Naive thymus-derived CD4-positive, alpha-beta T cell (primary cell): ENCODE measurements at regions of chr12 and their contacts with region 1.

Region 1: GRCh38 chr12:6140651-6141447 is 16.4 kb upstream of the VWF start:
- DNase-seq: peak in 8 of 9 donors; percentile 28 to 72 (median 68)
- ATAC-seq: peak; percentile 78
- H3K4me3 ChIP-seq: peak overlapping the region; percentile 24
- H3K4me3 Mint-ChIP-seq: peak overlapping the region; percentile 61 to 88 (median 78)
- H3K27ac ChIP-seq: peak overlapping the region; percentile 62
- H3K27ac Mint-ChIP-seq: peak overlapping the region; percentile 91 to 99 (median 97)
- H3K4me1 ChIP-seq: peaks cover 3 to 51% of the 10 kb centered on the region in 2 donors
- H3K4me1 Mint-ChIP-seq: peaks cover 32 to 61% (median 56%) of the 10 kb centered on the region in 7 donors
- H3K27me3 ChIP-seq: no peaks in the 10 kb centered on the region
- H3K27me3 Mint-ChIP-seq: no peaks in the 10 kb centered on the region

Region 2: DNA sequence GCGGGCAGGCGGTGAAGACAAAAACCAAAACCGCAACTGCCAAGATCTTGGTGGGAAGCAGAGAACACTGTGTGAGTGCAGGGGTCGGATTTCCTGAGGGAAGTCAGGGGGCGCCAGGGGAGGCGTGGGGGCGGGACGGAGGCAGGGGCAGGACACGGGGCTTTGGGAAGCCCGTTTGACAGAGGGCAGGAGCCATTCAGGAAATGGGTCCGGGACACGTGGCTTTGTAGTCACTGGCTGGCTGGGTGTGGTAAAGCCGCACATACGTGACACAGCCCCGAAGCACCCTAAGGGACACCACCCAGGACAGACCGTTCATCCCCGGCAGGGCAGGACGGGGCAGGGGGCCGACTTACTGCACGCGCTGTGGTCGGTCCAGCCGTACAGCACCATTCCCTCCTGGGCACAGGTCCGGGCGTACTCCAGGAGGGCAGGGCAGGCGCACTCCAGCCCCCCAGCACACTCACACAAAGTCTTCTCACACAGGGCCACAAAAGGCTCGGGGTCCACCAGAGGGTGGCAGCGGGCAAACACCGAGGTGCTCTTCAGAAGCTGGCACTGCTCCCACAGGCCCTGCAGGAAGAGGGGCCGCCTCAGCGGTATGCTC is 65.8 kb before region 1 on chr12:
- CTCF ChIA-PET with region 1: interaction called, 5 read pairs
- POLR2A ChIA-PET with region 1: interaction called, 3 read pairs
- intact Hi-C with region 1: loop called in 1 of 2 experiments (anchors 2 kb)
- DNase-seq: peak in 6 of 9 donors; percentile 30 to 48 (median 40)
- ATAC-seq: peak; percentile 84
- H3K4me3 ChIP-seq: peak overlapping the region; percentile 32
- H3K4me3 Mint-ChIP-seq: peak overlapping the region; percentile 83 to 94 (median 89)
- H3K27ac ChIP-seq: no peak overlapping the region
- H3K27ac Mint-ChIP-seq: peak overlapping the region in 7 of 9 donors; percentile 32 to 94 (median 52)
- H3K4me1 ChIP-seq: peaks cover 9 to 18% of the 10 kb centered on the region in 2 donors
- H3K4me1 Mint-ChIP-seq: peaks cover 23 to 29% (median 27%) of the 10 kb centered on the region in 7 donors
- H3K27me3 ChIP-seq: no peaks in the 10 kb centered on the region
- H3K27me3 Mint-ChIP-seq: peaks cover 0 to 30% (median 5%) of the 10 kb centered on the region in 5 donors

Region 3: DNA sequence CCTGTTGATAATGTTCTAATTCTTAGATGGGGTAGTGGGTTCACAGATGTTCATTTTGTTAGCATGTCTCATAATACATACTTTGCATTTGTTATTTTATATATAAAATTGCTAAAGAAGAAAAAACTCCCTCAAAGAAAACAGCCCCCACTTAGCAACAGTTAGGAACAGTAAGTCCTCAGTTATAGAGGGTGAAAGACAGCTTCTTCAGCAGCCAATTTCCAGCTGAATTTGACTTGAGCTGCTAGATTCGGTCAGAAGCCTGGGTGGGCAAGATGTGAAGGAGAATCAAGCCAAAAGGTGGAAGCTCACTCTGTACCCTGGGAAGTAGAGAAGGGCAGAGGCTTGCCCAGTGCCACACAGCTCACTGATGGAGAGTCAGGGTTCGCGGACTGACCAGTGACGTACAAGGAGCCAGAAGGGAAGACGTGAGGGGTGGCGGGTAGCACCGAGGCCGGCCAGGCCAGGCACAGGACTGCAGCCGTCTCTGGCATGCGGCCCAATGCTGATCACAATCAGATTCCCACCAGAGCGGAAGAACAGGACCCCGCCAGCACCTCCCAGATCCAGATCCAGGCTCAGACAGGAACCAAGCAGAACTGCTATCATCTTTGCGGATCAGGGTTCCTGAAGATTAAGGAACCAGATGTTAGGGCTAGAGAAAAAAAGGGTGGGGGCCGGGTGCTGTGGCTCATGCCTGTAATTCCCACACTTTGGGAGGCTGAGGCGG is 14.0 kb after region 1 on chr12:
- CTCF ChIA-PET with region 1: interaction called, 3 read pairs
- POLR2A ChIA-PET with region 1: interaction called, 11 read pairs
- intact Hi-C with region 1: no loop called
- DNase-seq: no peak
- ATAC-seq: no peak
- H3K4me3 ChIP-seq: no peak overlapping the region
- H3K4me3 Mint-ChIP-seq: no peak overlapping the region
- H3K27ac ChIP-seq: no peak overlapping the region
- H3K27ac Mint-ChIP-seq: no peak overlapping the region
- H3K4me1 ChIP-seq: no peaks in the 10 kb centered on the region
- H3K4me1 Mint-ChIP-seq: peaks cover 0 to 14% (median 6%) of the 10 kb centered on the region in 7 donors
- H3K27me3 ChIP-seq: no peaks in the 10 kb centered on the region
- H3K27me3 Mint-ChIP-seq: peaks cover 0 to 7% (median 0%) of the 10 kb centered on the region in 5 donors

Region 4: DNA sequence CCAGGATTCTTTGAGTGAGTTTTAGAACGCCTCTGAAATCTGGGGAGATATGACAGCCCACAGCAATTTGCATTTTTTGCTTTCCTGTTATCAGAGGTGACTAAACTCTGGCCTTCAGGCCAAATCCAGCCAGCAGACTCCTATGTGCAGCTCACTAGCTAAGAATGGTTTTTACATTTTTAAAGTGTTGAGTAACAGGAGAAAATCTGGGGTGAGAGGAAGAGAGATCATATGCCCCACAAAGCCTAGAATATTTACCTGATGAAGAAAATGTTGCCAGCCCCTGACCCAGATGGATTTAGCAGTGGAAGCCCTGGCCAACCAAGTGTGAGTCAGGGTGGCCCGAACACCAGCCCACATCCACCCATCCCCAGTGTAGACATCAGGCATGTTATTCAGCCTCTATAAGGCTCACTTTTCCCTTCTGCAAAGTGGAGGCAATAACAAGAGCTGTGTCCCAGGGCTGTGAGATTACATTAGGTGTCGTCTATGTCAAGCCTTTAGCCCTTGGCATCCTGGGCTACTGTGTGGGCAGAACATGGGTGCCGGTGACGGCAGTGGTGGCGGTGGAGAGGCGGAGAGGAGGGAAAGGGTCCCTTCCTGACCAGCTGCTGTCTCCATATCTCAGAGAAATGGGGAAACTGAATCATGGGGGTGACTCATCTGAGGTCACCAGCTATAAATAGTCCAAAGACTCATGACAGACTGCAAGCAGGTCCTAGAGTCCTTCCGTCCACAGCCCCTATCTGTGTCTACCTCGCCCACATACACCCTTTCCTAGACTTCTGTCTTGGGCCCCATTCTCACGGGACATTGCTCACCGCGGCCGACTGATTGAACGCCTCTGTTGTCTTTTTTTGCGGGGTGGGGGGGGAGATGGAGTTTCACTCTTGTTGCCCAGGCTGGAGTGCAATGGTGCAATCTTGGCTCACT is 26.7 kb after region 1 on chr12:
- CTCF ChIA-PET with region 1: interaction called, 5 read pairs
- POLR2A ChIA-PET with region 1: interaction called, 13 read pairs
- intact Hi-C with region 1: loop called in 1 of 2 experiments (anchors 1 kb)
- DNase-seq: peak in 3 of 9 donors; percentile 10 to 76 (median 25)
- ATAC-seq: peak; percentile 86
- H3K4me3 ChIP-seq: no peak overlapping the region
- H3K4me3 Mint-ChIP-seq: peak overlapping the region; percentile 35 to 75 (median 62)
- H3K27ac ChIP-seq: no peak overlapping the region
- H3K27ac Mint-ChIP-seq: peak overlapping the region in 8 of 9 donors; percentile 10 to 85 (median 56)
- H3K4me1 ChIP-seq: peaks cover 0 to 25% of the 10 kb centered on the region in 2 donors
- H3K4me1 Mint-ChIP-seq: peaks cover 22 to 48% (median 33%) of the 10 kb centered on the region in 7 donors
- H3K27me3 ChIP-seq: no peaks in the 10 kb centered on the region
- H3K27me3 Mint-ChIP-seq: peaks cover 0 to 6% (median 0%) of the 10 kb centered on the region in 5 donors